ENCODE measurements at regions of chr6 and their contacts with region 1.

Region 1: DNA sequence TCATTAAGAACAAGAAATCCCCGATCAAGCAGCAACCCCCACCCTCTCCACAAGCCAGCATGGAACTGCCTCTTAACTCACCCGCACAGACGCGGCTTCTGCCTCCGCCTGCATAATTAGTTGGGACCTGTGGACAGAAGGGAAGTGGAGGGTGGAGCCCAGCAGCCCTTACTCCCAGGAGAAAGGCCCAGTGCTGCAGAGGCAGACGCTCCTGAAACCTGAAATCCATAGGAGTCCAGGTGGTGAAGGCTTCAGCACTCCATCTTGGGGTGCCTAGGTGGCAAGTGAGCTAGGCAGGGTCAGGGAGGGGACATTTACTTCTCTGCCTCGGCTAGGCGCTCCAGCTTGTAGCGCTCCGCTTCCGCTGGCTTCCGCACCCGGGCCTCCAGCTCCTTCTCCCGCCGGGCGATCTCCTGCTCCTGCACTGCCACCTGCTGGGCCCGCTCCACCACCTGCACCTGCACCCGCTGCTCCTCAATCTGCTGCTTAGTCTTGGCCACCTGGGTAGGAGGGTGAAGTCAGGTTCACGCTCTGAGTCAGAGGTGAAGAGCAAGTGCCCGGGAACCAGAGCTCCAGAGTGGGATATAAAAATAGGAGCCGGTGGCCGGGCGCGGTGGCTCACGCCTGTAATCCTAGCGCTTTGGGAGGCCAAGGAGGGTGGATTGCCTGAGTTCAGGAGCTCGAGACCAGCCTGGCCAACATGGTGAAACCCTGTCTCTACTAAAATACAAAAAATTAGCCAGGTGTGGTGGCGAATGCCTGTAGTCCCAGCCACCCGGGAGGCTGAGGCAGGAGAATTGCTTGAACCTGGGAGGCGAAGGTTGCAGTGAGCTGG is 10.7 kb downstream of the TUBB start:
- DNase-seq: peak; percentile 86
- ATAC-seq: peak; percentile 89
- H3K4me3 ChIP-seq: peak overlapping the region in 3 of 5 experiments; percentile 5 to 29 (median 25)
- H3K4me3 Mint-ChIP-seq: peak overlapping the region; percentile 40
- H3K27ac ChIP-seq: no peak overlapping the region
- H3K27ac Mint-ChIP-seq: peak overlapping the region; percentile 42
- H3K4me1 ChIP-seq: peaks cover 22 to 23% of the 10 kb centered on the region in 2 donors
- H3K4me1 Mint-ChIP-seq: peaks cover 25% of the 10 kb centered on the region
- H3K27me3 ChIP-seq: no peaks in the 10 kb centered on the region
- H3K27me3 Mint-ChIP-seq: no peaks in the 10 kb centered on the region
- CTCF ChIP-seq: peak; percentile 77

Region 2: DNA sequence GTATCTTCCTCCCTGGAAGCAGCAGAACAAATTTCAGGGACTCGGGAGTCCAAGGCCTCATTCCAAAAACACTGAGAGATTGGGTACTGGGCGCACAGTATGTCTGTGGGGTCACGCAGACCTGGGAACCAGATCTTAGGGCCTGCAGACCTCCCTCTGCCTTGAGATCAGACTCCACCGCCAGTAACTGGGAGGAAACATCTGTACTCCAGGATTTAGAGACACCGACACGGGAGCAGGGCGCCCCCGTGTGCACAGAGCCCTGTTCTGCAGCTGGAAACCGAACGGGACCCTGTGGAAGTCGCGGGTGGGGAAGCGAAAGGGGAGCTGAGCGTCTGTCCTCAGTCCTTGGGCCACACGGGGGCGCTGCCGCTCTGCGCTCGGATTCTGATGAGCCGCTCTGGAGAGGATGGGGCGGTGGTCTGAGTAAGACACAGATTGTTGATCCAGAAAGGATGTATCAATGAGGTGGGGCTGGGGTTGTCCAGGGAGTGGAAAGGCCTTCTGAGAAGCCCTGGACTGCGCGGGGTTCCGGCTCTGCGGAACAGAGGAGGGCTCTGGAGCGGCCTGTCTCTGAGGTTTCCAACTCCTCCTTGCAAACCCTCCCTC is 277.2 kb before region 1 on chr6:
- CTCF ChIA-PET with region 1: interaction called, 12 read pairs
- POLR2A ChIA-PET with region 1: no interaction called
- intact Hi-C with region 1: no loop called
- DNase-seq: peak; percentile 88
- ATAC-seq: peak; percentile 90
- H3K4me3 ChIP-seq: no peak overlapping the region
- H3K4me3 Mint-ChIP-seq: peak overlapping the region; percentile 69
- H3K27ac ChIP-seq: no peak overlapping the region
- H3K27ac Mint-ChIP-seq: peak overlapping the region; percentile 63
- H3K4me1 ChIP-seq: peaks cover 41 to 43% of the 10 kb centered on the region in 2 donors
- H3K4me1 Mint-ChIP-seq: peaks cover 32% of the 10 kb centered on the region
- H3K27me3 ChIP-seq: peaks cover 0 to 87% (median 62%) of the 10 kb centered on the region in 4 experiments
- H3K27me3 Mint-ChIP-seq: peaks cover 75% of the 10 kb centered on the region
- CTCF ChIP-seq: peak; percentile 83

Region 3: DNA sequence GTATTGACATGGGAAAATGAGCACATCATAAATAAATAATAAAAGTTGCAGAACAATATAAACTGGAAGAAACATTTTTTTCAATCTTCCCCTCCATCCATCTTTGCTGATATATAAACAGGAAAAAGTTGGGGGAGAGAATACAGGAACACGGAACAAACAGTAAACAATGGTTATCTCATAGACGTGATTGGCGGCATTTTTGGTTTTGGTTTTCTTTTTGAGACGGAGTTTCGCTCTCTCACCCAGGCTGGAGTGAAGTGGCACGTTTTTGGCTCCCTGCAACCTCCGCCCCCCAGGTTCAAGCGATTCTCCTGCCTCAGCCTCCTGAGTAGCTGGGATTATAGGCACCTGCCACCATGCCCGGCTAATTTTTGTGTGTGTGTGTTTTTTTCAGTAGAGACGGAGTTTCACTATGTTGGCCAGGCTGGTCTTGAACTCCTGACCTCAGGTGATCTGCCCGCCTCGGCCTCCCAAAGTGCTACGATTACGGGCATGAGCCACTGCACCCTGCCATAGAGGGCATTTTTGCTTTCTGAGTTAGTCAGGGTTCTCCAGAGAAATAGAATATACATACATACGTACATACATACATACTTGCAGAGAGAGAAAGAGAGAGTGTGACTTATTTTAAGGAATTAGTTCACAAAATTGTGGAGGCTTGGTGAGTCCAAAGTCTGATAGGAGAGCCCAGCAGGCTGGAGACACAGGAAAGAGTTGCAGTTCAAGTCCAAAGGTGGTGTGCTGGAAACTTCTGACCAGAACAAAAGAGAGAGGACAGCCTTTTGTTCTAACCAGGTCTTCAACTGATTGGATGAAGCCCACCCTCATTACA is 197.1 kb before region 1 on chr6:
- CTCF ChIA-PET with region 1: interaction called, 13 read pairs
- POLR2A ChIA-PET with region 1: interaction called, 3 read pairs
- intact Hi-C with region 1: no loop called
- DNase-seq: no peak
- ATAC-seq: no peak
- H3K4me3 ChIP-seq: no peak overlapping the region
- H3K4me3 Mint-ChIP-seq: peak overlapping the region; percentile 59
- H3K27ac ChIP-seq: no peak overlapping the region
- H3K27ac Mint-ChIP-seq: peak overlapping the region; percentile 50
- H3K4me1 ChIP-seq: peaks cover 28 to 38% of the 10 kb centered on the region in 2 donors
- H3K4me1 Mint-ChIP-seq: peaks cover 26% of the 10 kb centered on the region
- H3K27me3 ChIP-seq: no peaks in the 10 kb centered on the region
- H3K27me3 Mint-ChIP-seq: no peaks in the 10 kb centered on the region
- CTCF ChIP-seq: no peak

Region 4: GRCh38 chr6:30626484-30627366 is 104.1 kb before region 1 on chr6 and contains the start of gene ATAT1:
- CTCF ChIA-PET with region 1: interaction called, 18 read pairs
- POLR2A ChIA-PET with region 1: interaction called, 5 read pairs
- intact Hi-C with region 1: loop called (anchors 1 kb)
- DNase-seq: peak; percentile 93
- ATAC-seq: peak; percentile 99
- H3K4me3 ChIP-seq: peak within 1 kb of the TSS; percentile 60 to 87 (median 72)
- H3K4me3 Mint-ChIP-seq: peak within 1 kb of the TSS; percentile 93
- H3K27ac ChIP-seq: peak within 1 kb of the TSS; percentile 84 to 87
- H3K27ac Mint-ChIP-seq: peak within 1 kb of the TSS; percentile 89
- H3K4me1 ChIP-seq: peaks cover 12 to 18% of the 10 kb centered on the region in 2 donors
- H3K4me1 Mint-ChIP-seq: peaks cover 19% of the 10 kb centered on the region
- H3K27me3 ChIP-seq: no peaks in the 10 kb centered on the region
- H3K27me3 Mint-ChIP-seq: no peaks in the 10 kb centered on the region
- CTCF ChIP-seq: peak; percentile 64
- total RNA-seq, gene ATAT1: 19.3 and 21.5 TPM in 2 replicates

Region 5: DNA sequence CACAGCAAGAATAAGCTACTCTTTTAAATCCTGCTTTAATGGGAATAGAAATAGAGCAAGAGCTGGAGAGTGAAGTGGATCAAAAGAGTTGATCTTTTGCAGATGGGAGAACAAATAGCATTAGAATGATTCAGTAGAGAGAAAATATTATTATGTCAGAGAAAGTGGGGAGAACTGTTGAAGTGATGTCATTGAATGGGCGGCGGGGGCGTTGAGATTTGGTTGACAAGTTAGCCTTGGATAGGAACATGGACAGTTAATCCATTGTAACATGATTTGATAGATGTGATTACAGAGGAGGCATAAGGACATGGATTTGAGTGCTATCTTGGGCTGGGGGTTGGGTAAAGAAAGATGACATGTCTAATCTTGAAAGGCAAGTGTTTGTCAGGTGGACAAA is 95.0 kb before region 1 on chr6:
- CTCF ChIA-PET with region 1: interaction called, 3 read pairs
- POLR2A ChIA-PET with region 1: interaction called, 12 read pairs
- intact Hi-C with region 1: no loop called
- DNase-seq: no peak
- ATAC-seq: no peak
- H3K4me3 ChIP-seq: no peak overlapping the region
- H3K4me3 Mint-ChIP-seq: no peak overlapping the region
- H3K27ac ChIP-seq: no peak overlapping the region
- H3K27ac Mint-ChIP-seq: no peak overlapping the region
- H3K4me1 ChIP-seq: no peaks in the 10 kb centered on the region
- H3K4me1 Mint-ChIP-seq: no peaks in the 10 kb centered on the region
- H3K27me3 ChIP-seq: no peaks in the 10 kb centered on the region
- H3K27me3 Mint-ChIP-seq: no peaks in the 10 kb centered on the region
- CTCF ChIP-seq: no peak

Region 6: DNA sequence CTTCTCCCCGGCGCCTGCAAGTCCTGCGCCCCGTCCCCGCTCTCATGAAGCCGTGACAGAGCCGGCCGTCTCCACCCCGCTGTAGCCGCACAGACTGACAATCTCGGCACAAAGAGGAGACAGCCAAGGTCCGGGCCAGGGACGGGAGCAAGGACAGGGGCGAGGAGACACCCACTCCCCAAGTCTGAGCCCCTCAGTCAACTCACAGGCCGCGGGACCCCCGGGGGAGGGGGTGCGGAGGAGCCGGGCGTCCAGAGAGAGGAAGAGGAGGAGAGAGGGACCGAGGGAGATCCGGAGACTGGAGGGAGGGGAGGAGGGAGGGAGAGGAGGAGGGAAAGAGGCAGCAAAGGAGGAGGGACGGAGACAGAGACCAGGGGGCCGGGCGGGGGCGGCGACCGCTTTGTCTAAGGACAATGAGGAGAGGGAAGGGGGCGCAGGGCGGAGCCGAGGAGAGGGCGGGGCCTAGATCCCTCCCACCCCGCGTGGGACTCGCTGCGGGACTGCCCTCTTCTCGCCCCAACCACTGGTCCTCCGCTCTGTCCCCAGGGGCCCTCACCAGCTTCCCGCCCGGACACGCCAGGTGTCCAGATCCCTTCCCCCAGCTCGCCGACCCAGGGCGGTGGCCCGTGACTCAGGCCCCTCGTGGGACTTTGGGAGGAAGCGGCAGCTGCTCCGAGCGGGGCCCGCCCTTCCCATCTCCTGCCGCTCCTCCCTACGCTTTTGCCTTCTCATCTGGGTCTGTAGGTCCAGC is 43.7 kb before region 1 on chr6:
- CTCF ChIA-PET with region 1: interaction called, 963 read pairs
- POLR2A ChIA-PET with region 1: interaction called, 4 read pairs
- intact Hi-C with region 1: no loop called
- DNase-seq: peak; percentile 90
- ATAC-seq: peak; percentile 55
- H3K4me3 ChIP-seq: peak overlapping the region; percentile 40 to 100 (median 93)
- H3K4me3 Mint-ChIP-seq: peak overlapping the region; percentile 97
- H3K27ac ChIP-seq: peak overlapping the region; percentile 93 to 97
- H3K27ac Mint-ChIP-seq: peak overlapping the region; percentile 99
- H3K4me1 ChIP-seq: peaks cover 39 to 46% of the 10 kb centered on the region in 2 donors
- H3K4me1 Mint-ChIP-seq: peaks cover 71% of the 10 kb centered on the region
- H3K27me3 ChIP-seq: no peaks in the 10 kb centered on the region
- H3K27me3 Mint-ChIP-seq: no peaks in the 10 kb centered on the region
- CTCF ChIP-seq: no peak

Region 7: GRCh38 chr6:30750379-30750668 is 19.5 kb after region 1 on chr6:
- CTCF ChIA-PET with region 1: no interaction called
- POLR2A ChIA-PET with region 1: no interaction called
- intact Hi-C with region 1: no loop called
- DNase-seq: no peak
- ATAC-seq: no peak
- H3K4me3 ChIP-seq: no peak overlapping the region
- H3K4me3 Mint-ChIP-seq: no peak overlapping the region
- H3K27ac ChIP-seq: no peak overlapping the region
- H3K27ac Mint-ChIP-seq: no peak overlapping the region
- H3K4me1 ChIP-seq: no peaks in the 10 kb centered on the region
- H3K4me1 Mint-ChIP-seq: peaks cover 1% of the 10 kb centered on the region
- H3K27me3 ChIP-seq: no peaks in the 10 kb centered on the region
- H3K27me3 Mint-ChIP-seq: no peaks in the 10 kb centered on the region
- CTCF ChIP-seq: no peak

Region 8: GRCh38 chr6:30877419-30878371 is 146.9 kb after region 1 on chr6:
- CTCF ChIA-PET with region 1: no interaction called
- POLR2A ChIA-PET with region 1: no interaction called
- intact Hi-C with region 1: no loop called
- DNase-seq: peak; percentile 79
- ATAC-seq: peak; percentile 82
- H3K4me3 ChIP-seq: peak overlapping the region in 1 of 5 experiments; percentile 21
- H3K4me3 Mint-ChIP-seq: peak overlapping the region; percentile 48
- H3K27ac ChIP-seq: peak overlapping the region in 1 of 2 donors; percentile 44
- H3K27ac Mint-ChIP-seq: peak overlapping the region; percentile 54
- H3K4me1 ChIP-seq: peaks cover 27 to 28% of the 10 kb centered on the region in 2 donors
- H3K4me1 Mint-ChIP-seq: peaks cover 37% of the 10 kb centered on the region
- H3K27me3 ChIP-seq: no peaks in the 10 kb centered on the region
- H3K27me3 Mint-ChIP-seq: peaks cover 3% of the 10 kb centered on the region
- CTCF ChIP-seq: peak; percentile 82